ENCODE measurements at regions of chr11 and their contacts with region 1.

Region 1: GRCh38 chr11:35641171-35641897 is 21.2 kb upstream of the TRIM44 start:
- DNase-seq: no peak
- H3K4me3 ChIP-seq: no peak overlapping the region
- CTCF ChIP-seq: no peak

Region 2: GRCh38 chr11:35541621-35542375 is 99.5 kb before region 1 on chr11:
- in situ Hi-C with region 1: no loop called
- DNase-seq: peak; percentile 89
- H3K4me3 ChIP-seq: no peak overlapping the region
- CTCF ChIP-seq: no peak

Region 3: GRCh38 chr11:35702126-35702525 is 60.8 kb after region 1 on chr11:
- in situ Hi-C with region 1: no loop called
- DNase-seq: no peak
- H3K4me3 ChIP-seq: no peak overlapping the region
- CTCF ChIP-seq: no peak

Region 4: GRCh38 chr11:35714882-35715627 is 73.7 kb after region 1 on chr11:
- in situ Hi-C with region 1: loop called (anchors 5 kb)
- DNase-seq: no peak
- H3K4me3 ChIP-seq: no peak overlapping the region
- CTCF ChIP-seq: no peak